MCF 10A (cell line): ENCODE measurements at regions of chr11 and their contacts with region 1.

Region 1: DNA sequence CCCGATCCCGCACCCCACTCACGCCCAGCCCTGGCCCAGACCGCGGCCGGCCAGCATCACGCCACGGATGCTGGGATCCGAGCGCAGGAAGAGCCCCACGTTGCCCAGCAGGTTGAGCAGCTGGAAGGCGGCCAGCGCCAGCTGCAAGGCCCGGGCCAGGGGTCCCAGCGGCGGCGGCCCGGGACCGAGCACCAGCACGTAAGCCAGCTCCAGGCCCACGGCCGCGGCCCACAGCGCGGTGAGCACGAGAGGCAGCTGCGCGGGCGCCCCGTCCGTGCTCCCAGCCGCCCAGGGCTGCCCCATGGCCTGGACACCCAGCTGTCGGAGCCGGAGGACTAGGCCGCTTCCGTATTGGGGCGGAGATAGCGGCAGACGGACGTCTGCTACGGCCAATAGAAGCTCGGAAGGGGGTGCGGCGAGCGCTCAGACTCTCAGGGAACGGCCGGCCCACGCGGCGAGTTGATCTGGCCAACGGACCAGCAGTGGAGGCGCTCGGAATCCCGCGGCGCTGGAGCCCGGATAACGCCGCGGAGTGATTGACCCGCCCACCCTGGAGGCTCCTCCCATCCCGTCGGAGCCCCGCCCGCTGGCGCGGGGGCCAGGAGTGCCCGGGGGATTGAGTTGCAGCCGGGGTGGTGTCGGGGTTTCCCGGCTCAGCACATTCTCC is at the start of gene ZDHHC24:
- DNase-seq: peak; percentile 98
- H3K4me3 Mint-ChIP-seq: peak within 1 kb of the TSS; percentile 78
- H3K27ac Mint-ChIP-seq: peak within 1 kb of the TSS; percentile 92
- H3K4me1 Mint-ChIP-seq: peaks cover 41% of the 10 kb centered on the region
- H3K27me3 Mint-ChIP-seq: peaks cover 15% of the 10 kb centered on the region
- CTCF ChIP-seq: no peak
- total RNA-seq, gene ZDHHC24: 11.1 and 12.4 TPM in 2 replicates

Region 2: GRCh38 chr11:66510271-66510989 is 35.4 kb before region 1 on chr11 and contains the start of gene BBS1:
- CTCF ChIA-PET with region 1: no interaction called
- POLR2A ChIA-PET with region 1: interaction called, 10 read pairs
- intact Hi-C with region 1: no loop called
- DNase-seq: peak; percentile 72
- H3K4me3 Mint-ChIP-seq: peak within 1 kb of the TSS; percentile 98
- H3K27ac Mint-ChIP-seq: peak within 1 kb of the TSS; percentile 88
- H3K4me1 Mint-ChIP-seq: peaks cover 11% of the 10 kb centered on the region
- H3K27me3 Mint-ChIP-seq: no peaks in the 10 kb centered on the region
- CTCF ChIP-seq: no peak
- total RNA-seq, gene BBS1: 31.7 and 33.9 TPM in 2 replicates

Region 3: GRCh38 chr11:66530927-66531709 is 14.7 kb before region 1 on chr11:
- CTCF ChIA-PET with region 1: interaction called, 4 read pairs
- POLR2A ChIA-PET with region 1: interaction called, 12 read pairs
- intact Hi-C with region 1: no loop called
- DNase-seq: no peak
- H3K4me3 Mint-ChIP-seq: no peak overlapping the region
- H3K27ac Mint-ChIP-seq: no peak overlapping the region
- H3K4me1 Mint-ChIP-seq: no peaks in the 10 kb centered on the region
- H3K27me3 Mint-ChIP-seq: no peaks in the 10 kb centered on the region
- CTCF ChIP-seq: no peak

Region 4: DNA sequence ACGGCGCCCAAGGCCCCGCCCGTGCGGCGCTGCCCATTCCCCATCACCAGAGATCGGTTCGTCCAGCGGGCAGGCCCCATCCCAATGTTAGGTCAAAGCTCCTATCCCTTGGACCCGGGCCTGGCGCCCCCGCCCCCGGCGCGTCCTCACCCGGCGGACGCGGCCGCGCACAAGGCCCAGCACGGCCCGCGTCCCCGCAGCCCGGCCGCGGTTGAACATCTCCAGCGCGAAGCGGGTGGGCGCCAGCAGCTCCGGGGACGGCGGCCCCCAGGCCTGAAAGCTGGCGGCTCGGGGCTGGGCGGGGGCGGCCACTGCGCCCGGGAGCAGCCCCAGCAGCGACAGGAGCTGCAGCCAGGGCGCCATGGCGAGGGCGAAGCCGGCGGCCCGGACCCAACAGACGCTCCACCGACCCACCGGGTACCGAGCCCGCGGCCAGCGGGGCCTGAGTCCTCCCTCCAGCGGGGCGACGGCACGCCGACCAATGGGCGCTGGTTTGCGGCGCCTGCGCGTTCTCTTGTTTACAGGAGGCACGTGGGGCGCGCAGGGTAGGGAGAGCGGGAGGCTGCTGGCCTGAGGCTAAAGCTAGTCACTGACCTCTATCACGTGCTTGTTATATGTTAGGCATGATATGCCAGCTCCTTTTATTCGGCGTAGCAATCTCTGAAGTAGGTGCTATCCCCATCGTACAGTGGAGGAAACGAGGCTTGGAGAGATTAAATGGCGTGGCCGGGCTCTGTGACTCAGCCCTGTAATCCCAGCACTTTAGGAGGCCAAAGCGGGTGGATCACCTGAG is 22.5 kb after region 1 on chr11 and contains the start of gene CTSF:
- CTCF ChIA-PET with region 1: no interaction called
- POLR2A ChIA-PET with region 1: interaction called, 19 read pairs
- intact Hi-C with region 1: no loop called
- DNase-seq: peak; percentile 82
- H3K4me3 Mint-ChIP-seq: peak within 1 kb of the TSS; percentile 71
- H3K27ac Mint-ChIP-seq: peak within 1 kb of the TSS; percentile 77
- H3K4me1 Mint-ChIP-seq: peaks cover 7% of the 10 kb centered on the region
- H3K27me3 Mint-ChIP-seq: peaks cover under 1% of the 10 kb centered on the region
- CTCF ChIP-seq: no peak
- total RNA-seq, gene CTSF: 8.6 and 11.8 TPM in 2 replicates

Region 5: GRCh38 chr11:66592457-66593302 is 46.8 kb after region 1 on chr11 and contains the starts of genes CCDC87 and CCS:
- CTCF ChIA-PET with region 1: interaction called, 3 read pairs
- POLR2A ChIA-PET with region 1: interaction called, 11 read pairs
- intact Hi-C with region 1: no loop called
- DNase-seq: peak; percentile 94
- H3K4me3 Mint-ChIP-seq: peak within 1 kb of the TSS; percentile 94
- H3K27ac Mint-ChIP-seq: peak within 1 kb of the TSS; percentile 96
- H3K4me1 Mint-ChIP-seq: peaks cover 5% of the 10 kb centered on the region
- H3K27me3 Mint-ChIP-seq: no peaks in the 10 kb centered on the region
- CTCF ChIP-seq: peak; percentile 33
- total RNA-seq, gene CCDC87: not detected in 2 replicates
- total RNA-seq, gene CCS: 25.8 and 34.4 TPM in 2 replicates

Region 6: DNA sequence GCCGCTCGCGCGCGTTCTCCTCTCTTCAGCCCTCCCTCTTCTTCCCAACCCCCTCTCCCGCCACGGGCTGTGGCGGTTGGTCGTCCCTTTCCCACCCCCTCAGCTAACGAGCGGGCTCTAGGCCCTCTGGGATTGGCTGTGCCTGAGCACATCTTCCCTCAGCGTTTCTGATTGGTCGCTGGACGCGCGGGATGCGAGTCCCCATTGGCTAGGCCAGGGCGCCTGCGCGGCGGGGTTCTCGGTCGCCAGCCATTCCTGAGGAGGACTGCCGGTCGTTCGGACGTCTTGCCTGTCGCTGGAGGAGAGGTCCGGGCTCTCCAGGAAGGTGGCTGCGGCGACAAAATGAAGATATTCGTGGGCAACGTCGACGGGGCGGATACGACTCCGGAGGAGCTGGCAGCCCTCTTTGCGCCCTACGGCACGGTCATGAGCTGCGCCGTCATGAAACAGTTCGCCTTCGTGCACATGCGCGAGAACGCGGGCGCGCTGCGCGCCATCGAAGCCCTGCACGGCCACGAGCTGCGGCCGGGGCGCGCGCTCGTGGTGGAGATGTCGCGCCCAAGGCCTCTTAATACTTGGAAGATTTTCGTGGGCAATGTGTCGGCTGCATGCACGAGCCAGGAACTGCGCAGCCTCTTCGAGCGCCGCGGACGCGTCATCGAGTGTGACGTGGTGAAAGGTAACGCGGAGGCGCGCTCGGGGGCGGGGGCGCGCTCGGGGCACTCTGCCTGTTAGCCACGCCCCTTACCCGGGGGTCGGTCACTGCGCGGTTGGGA is 70.7 kb after region 1 on chr11 and contains the start of gene RBM14:
- CTCF ChIA-PET with region 1: no interaction called
- POLR2A ChIA-PET with region 1: interaction called, 23 read pairs
- intact Hi-C with region 1: no loop called
- DNase-seq: peak; percentile 99
- H3K4me3 Mint-ChIP-seq: peak within 1 kb of the TSS; percentile 86
- H3K27ac Mint-ChIP-seq: peak within 1 kb of the TSS; percentile 96
- H3K4me1 Mint-ChIP-seq: peaks cover 20% of the 10 kb centered on the region
- H3K27me3 Mint-ChIP-seq: no peaks in the 10 kb centered on the region
- CTCF ChIP-seq: no peak
- total RNA-seq, gene RBM14: 78.1 and 88.3 TPM in 2 replicates

Region 7: DNA sequence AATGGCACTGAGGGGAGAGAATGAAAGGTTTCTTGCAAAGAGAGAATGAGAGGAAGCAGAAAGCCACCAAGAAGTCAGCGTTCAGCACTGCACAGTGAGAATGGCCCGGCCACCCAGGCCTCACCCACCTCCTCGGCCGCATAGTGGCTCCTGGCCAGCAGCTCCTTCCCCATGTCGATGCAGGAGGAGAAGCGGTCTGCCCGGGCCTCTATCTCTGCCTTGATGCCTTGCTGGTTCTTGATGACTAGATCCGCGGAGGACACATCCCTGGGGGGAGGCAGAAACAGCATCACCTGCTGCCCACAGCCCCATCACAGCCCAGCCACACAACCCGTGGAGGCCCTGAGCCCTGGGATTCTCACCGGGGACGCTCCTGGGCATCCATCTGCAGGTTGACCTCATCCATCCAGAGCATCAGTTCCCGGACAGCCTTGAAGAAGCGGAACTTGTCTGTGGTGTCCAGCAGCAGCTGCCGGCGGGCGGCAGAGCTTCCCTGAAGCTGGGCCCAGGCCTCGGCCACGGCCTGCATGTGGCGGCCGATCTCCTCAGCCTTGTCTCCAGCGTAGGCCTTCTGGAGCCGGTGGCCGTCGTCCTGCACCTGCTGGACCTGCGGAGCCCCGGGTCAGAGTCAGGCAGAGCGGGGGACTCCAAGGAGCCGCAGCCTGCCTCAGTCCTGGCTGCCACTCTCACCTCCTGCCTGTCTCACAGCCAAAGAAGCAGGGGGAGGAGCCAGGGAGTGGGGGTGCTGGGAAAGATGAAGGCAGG is 144.0 kb after region 1 on chr11:
- CTCF ChIA-PET with region 1: no interaction called
- POLR2A ChIA-PET with region 1: no interaction called
- intact Hi-C with region 1: no loop called
- DNase-seq: no peak
- H3K4me3 Mint-ChIP-seq: no peak overlapping the region
- H3K27ac Mint-ChIP-seq: no peak overlapping the region
- H3K4me1 Mint-ChIP-seq: no peaks in the 10 kb centered on the region
- H3K27me3 Mint-ChIP-seq: no peaks in the 10 kb centered on the region
- CTCF ChIP-seq: no peak